ENCODE measurements at regions of chr3 and their contacts with region 1.

Region 1: GRCh38 chr3:16906682-16907081 is 21.9 kb downstream of the PLCL2 start:
- DNase-seq: no peak
- ATAC-seq: peak; percentile 62 to 84 (median 72)
- H3K4me3 ChIP-seq: peak overlapping the region in 1 of 12 donors; percentile 3
- H3K27ac ChIP-seq: peak overlapping the region in 10 of 12 donors; percentile 7 to 67 (median 57)
- H3K4me1 ChIP-seq: peaks cover 7 to 85% (median 68%) of the 10 kb centered on the region in 12 donors
- H3K27me3 ChIP-seq: no peaks in the 10 kb centered on the region
- CTCF ChIP-seq: no peak
- POLR2A ChIP-seq: no peak

Region 2: GRCh38 chr3:16940769-16941700 is 34.4 kb after region 1 on chr3:
- intact Hi-C with region 1: loop called in 1 of 10 experiments (anchors 5 kb)
- DNase-seq: no peak
- ATAC-seq: peak in 3 of 4 donors; percentile 51 to 73 (median 60)
- H3K4me3 ChIP-seq: no peak overlapping the region
- H3K27ac ChIP-seq: peak overlapping the region in 9 of 12 donors; percentile 4 to 56 (median 33)
- H3K4me1 ChIP-seq: peaks cover 0 to 82% (median 43%) of the 10 kb centered on the region in 12 donors
- H3K27me3 ChIP-seq: no peaks in the 10 kb centered on the region
- CTCF ChIP-seq: no peak
- POLR2A ChIP-seq: no peak

Region 3: GRCh38 chr3:16993227-16993626 is 86.5 kb after region 1 on chr3:
- intact Hi-C with region 1: no loop called
- DNase-seq: no peak
- ATAC-seq: peak in 1 of 4 donors; percentile 30
- H3K4me3 ChIP-seq: no peak overlapping the region
- H3K27ac ChIP-seq: no peak overlapping the region
- H3K4me1 ChIP-seq: peaks cover 4 to 67% (median 24%) of the 10 kb centered on the region in 12 donors
- H3K27me3 ChIP-seq: no peaks in the 10 kb centered on the region
- CTCF ChIP-seq: no peak
- POLR2A ChIP-seq: no peak

Region 4: DNA sequence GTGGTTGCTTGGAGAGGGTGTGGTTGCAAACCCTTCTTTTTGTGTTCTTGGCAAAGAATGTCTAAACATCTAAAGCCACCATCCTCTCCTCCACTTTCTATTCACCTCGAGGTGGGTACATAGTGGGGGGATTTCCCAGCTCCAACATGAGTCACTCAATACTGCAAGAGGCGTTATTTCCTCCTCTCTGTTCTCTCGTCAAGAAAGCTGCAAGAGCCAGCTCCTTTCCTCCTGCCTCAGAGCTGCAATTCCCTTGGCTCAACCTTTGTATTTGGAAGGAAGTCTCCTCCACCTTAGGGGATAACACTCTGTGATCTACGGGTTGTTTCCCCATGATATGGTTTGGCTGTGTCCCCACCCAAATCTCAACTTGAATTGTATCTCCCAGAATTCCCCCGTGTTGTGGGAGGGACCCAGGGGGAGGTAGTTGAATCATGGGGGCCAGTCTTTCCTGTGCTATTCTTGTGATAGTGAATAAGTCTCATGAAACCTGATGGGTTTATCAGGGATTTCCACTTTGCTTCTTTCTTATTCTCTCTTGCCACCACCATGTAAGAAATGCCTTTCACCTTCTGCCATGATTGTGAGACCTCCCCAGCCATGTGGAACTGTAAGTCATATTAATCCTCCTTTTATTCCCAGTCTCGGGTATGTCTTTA is 116.5 kb after region 1 on chr3:
- intact Hi-C with region 1: loop called in 1 of 10 experiments (anchors 5 kb)
- DNase-seq: no peak
- ATAC-seq: peak in 3 of 4 donors; percentile 28 to 82 (median 67)
- H3K4me3 ChIP-seq: no peak overlapping the region
- H3K27ac ChIP-seq: peak overlapping the region in 1 of 12 donors; percentile 11
- H3K4me1 ChIP-seq: peaks cover 0 to 20% (median 6%) of the 10 kb centered on the region in 12 donors
- H3K27me3 ChIP-seq: no peaks in the 10 kb centered on the region
- CTCF ChIP-seq: no peak
- POLR2A ChIP-seq: no peak

Region 5: DNA sequence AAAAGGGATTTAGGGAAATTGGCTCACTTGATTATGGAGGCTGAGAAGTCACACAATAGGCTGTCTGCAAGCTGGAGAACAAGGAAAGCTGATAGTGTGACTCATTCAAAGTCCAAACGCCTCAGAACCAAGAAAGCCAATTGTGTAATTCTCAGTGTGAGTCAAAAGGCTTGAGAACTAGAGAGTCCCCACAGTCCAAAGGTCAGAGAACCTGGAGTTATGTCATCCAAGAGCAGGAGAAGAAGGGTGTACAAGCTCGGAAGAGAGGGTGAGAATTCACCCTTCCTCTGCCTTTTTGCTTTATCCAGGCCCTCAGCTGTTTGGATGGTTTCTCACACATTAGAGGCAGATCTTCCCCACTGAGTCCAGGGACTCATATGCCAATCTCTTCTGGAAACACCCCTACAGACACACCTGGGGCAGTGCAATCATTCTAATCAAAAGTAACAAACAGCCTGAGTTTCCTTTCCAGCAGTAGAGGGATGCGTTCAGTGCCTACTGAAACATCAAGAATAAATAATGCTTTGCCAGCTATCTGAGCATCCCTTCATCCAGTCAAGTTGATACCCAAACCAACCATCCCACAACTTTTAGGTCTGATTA is 1247.0 kb after region 1 on chr3:
- intact Hi-C with region 1: no loop called
- DNase-seq: no peak
- ATAC-seq: no peak
- H3K4me3 ChIP-seq: no peak overlapping the region
- H3K27ac ChIP-seq: no peak overlapping the region
- H3K4me1 ChIP-seq: no peaks in the 10 kb centered on the region
- H3K27me3 ChIP-seq: no peaks in the 10 kb centered on the region
- CTCF ChIP-seq: no peak
- POLR2A ChIP-seq: no peak

Measured in heart left ventricle (tissue), 16 donors.